PC-9 (cell line): ENCODE measurements at regions of chr17 and their contacts with region 1.

Region 1: GRCh38 chr17:81419328-81419885 is 24.1 kb downstream of the BAHCC1 start:
- DNase-seq: peak; percentile 48 to 94
- H3K4me3 ChIP-seq: peak overlapping the region; percentile 40; the same call in 1 of the 2 replicates
- H3K27ac ChIP-seq: peak overlapping the region; percentile 63
- H3K4me1 ChIP-seq: peaks cover 36% of the 10 kb centered on the region
- H3K27me3 ChIP-seq: no peaks in the 10 kb centered on the region
- CTCF ChIP-seq: no peak

Region 2: GRCh38 chr17:81049973-81050551 is 369.3 kb before region 1 on chr17:
- CTCF ChIA-PET with region 1: interaction called, 12 read pairs
- POLR2A ChIA-PET with region 1: no interaction called
- intact Hi-C with region 1: no loop called
- DNase-seq: peak; percentile 96 to 97
- H3K4me3 ChIP-seq: peak overlapping the region; percentile 41; the same call in 1 of the 2 replicates
- H3K27ac ChIP-seq: peak overlapping the region; percentile 87
- H3K4me1 ChIP-seq: peaks cover 56% of the 10 kb centered on the region
- H3K27me3 ChIP-seq: no peaks in the 10 kb centered on the region
- CTCF ChIP-seq: no peak

Region 3: DNA sequence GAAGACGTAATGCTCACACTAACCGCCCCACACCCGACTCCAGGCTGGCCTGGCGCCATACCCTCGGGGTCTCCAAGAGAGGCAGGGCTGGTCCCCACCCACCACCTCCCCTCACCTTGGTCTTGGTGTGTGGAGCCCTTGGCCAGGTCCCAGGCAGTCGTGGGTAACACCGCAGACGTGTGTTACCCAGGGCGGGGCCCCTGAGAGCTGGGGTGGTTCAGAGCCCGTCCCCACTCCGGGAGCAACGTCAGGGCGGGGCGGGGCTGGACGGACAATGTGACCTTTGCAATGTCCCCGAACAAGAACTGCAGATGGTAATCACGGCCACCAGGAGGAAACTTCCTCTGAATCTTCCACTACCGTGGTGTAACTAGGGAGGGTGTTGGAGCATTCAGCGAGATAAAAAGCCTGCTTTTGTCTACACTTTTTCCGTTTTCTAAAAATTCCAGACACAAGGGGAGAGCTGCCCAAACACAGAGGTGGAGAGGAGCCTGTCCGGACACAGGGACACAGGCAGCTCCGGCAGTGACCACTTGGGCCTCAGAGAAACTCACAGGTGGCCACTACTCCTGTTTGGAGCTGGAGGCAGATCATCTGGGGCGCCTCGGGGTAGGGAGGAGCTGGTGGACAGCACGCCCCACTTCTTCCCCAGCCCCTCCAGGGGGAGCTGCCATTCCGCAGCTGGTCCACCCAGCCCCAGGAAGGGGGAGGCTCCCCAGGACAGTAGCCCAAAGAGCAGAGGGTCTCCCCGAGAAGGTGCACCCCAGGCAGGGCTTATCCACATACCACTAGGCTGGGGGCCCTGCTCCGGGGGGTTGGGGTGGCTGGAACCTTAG is 110.1 kb before region 1 on chr17:
- CTCF ChIA-PET with region 1: no interaction called
- POLR2A ChIA-PET with region 1: interaction called, 17 read pairs
- intact Hi-C with region 1: no loop called
- DNase-seq: peak; percentile 76 to 92
- H3K4me3 ChIP-seq: peak overlapping the region; percentile 39; the same call in 1 of the 2 replicates
- H3K27ac ChIP-seq: peak overlapping the region; percentile 38; the same call in 1 of the 2 replicates
- H3K4me1 ChIP-seq: peaks cover 11% of the 10 kb centered on the region
- H3K27me3 ChIP-seq: no peaks in the 10 kb centered on the region
- CTCF ChIP-seq: peak; percentile 66

Region 4: DNA sequence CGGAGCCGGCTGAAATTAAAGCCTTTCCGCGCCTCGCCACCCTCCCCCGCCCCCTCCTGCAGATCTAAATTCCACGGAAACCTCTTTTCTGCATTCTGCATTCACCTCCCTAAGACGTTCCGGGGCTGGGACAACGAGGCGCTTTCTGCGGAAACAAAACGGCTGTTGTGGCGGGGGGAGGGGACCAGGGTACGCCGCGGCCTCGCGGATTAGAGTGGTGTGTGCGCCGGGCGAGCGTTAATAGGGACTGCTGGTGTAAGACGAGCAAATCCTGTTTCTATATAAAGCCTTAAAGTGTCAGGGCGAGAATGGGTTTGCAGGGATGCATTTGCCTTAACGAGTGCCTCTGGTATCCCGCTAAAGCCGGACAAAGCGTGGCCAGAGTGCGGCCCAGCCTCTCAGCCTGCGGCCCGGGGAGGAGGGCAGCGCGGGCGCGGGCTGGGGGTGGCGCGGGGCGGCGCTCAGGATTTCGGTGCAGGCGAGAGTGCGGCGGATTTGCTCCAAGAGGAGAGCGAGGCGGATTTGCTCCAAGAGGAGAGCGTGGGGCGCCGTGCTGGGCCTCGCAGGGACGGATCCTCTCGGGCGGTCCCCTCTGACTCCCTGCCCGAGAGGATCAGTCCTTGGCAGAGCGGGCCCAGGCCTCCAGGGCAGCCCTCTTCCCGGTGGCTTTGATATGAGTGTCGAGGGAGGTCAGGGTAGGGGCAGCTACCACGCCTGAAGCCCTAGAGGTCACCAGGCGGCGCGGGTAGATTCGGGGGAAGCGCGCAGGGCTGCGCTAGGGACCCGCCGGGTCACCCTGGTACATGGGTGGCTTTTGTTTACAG is 19.0 kb before region 1 on chr17:
- CTCF ChIA-PET with region 1: no interaction called
- POLR2A ChIA-PET with region 1: interaction called, 6 read pairs
- intact Hi-C with region 1: loop called (anchors 1 kb)
- DNase-seq: peak in 1 of 2 experiments; percentile 56
- H3K4me3 ChIP-seq: peak overlapping the region; percentile 66
- H3K27ac ChIP-seq: peak overlapping the region; percentile 54
- H3K4me1 ChIP-seq: peaks cover 5% of the 10 kb centered on the region; the same call in 1 of the 2 replicates
- H3K27me3 ChIP-seq: no peaks in the 10 kb centered on the region
- CTCF ChIP-seq: no peak

Region 5: GRCh38 chr17:81453712-81454111 is 34.3 kb after region 1 on chr17:
- CTCF ChIA-PET with region 1: no interaction called
- POLR2A ChIA-PET with region 1: no interaction called
- intact Hi-C with region 1: no loop called
- DNase-seq: no peak
- H3K4me3 ChIP-seq: no peak overlapping the region
- H3K27ac ChIP-seq: no peak overlapping the region
- H3K4me1 ChIP-seq: no peaks in the 10 kb centered on the region
- H3K27me3 ChIP-seq: no peaks in the 10 kb centered on the region
- CTCF ChIP-seq: no peak

Region 6: GRCh38 chr17:81471804-81472456 is 52.5 kb after region 1 on chr17:
- CTCF ChIA-PET with region 1: no interaction called
- POLR2A ChIA-PET with region 1: no interaction called
- intact Hi-C with region 1: no loop called
- DNase-seq: no peak
- H3K4me3 ChIP-seq: no peak overlapping the region
- H3K27ac ChIP-seq: no peak overlapping the region
- H3K4me1 ChIP-seq: no peaks in the 10 kb centered on the region
- H3K27me3 ChIP-seq: no peaks in the 10 kb centered on the region
- CTCF ChIP-seq: no peak

Region 7: DNA sequence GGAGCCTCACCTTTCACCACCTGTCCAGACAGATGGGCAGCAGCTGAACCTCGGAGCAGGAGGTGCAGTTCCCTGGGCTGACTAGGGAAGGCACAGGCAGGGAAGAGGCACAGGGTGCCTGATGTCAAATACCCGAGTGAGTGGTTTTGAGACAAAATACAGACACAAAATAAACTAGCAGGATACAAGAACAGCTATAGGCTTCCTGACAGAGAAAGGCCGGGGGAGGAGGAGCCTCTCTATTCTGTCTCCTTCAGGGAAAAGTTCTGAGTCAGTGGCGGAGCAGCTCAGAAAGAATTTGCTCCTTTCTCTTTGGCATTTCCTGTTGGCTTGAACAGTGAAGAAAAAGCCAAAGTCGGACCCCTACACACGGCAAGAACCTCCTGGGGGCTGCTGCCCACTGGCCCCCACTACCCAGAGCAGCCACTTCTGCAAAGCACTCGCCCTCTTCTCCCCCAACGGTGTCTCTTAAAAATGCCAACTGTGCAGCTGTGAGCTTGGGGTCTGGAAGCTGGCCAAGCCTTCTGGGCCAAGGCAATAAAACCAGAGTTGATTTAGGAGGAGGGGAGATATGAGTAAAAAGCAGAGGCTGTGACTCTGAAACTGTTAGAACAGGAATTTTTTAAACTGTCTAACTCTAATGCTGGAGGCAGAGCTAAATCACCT is 147.2 kb after region 1 on chr17:
- CTCF ChIA-PET with region 1: interaction called, 14 read pairs
- POLR2A ChIA-PET with region 1: no interaction called
- intact Hi-C with region 1: no loop called
- DNase-seq: peak; percentile 74 to 81
- H3K4me3 ChIP-seq: peak overlapping the region; percentile 34; the same call in 1 of the 2 replicates
- H3K27ac ChIP-seq: peak overlapping the region; percentile 63
- H3K4me1 ChIP-seq: peaks cover 47% of the 10 kb centered on the region
- H3K27me3 ChIP-seq: no peaks in the 10 kb centered on the region
- CTCF ChIP-seq: no peak